ENCODE measurements at regions of chr1 and their contacts with region 1.

Region 1: DNA sequence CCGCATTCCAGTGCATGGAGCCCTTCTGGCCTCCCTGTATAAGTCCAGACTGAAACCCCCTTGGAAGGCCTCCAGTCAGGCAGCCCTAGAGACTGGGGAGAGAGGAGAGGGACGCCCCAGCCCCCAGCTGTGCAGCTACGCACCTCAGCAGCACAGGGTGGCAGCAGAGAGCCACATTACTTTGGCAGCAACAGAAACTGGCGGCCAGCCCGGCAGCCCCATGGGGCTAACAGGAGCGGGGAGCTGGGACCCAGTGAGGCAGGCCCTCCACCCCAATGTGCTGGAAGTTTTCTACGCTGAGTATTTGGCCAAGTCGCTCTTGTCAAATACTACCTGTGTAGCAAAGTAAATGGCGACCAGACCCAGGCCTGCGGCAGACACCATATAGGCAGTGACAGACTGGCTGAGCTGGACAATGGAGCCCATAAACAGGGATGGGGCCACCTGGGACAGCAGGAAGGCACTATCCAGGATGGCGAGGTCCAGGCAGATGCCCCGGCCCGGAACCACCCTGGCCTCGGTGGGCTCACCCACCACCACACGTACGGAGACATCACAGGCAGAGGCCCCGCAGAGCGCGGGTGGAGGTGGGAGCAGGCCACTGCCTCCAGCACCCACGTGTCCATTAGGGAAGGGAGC is 21.2 kb downstream of the SLC45A3 start:
- DNase-seq: peak; percentile 91
- ATAC-seq: peak; percentile 92

Region 2: GRCh38 chr1:205528887-205529825 is 129.9 kb before region 1 on chr1:
- intact Hi-C with region 1: loop called (anchors 5 kb)
- DNase-seq: peak; percentile 90
- ATAC-seq: peak; percentile 69

Region 3: GRCh38 chr1:205591522-205592351 is 67.3 kb before region 1 on chr1:
- intact Hi-C with region 1: loop called (anchors 2 kb)
- DNase-seq: peak; percentile 91
- ATAC-seq: peak; percentile 97

Measured in Right ventricle myocardium superior (tissue), 1 donor.